Cardiac septum (tissue), 1 donor: ENCODE measurements at regions of chr2 and their contacts with region 1.

Region 1: GRCh38 chr2:210002158-210003157 is at the start of gene RPE:
- DNase-seq: peak; percentile 98
- total RNA-seq, gene RPE: 20.2 TPM

Region 2: GRCh38 chr2:209790066-209790728 is 212.3 kb before region 1 on chr2:
- intact Hi-C with region 1: no loop called
- DNase-seq: no peak

Region 3: GRCh38 chr2:209834767-209835166 is 167.7 kb before region 1 on chr2:
- intact Hi-C with region 1: no loop called
- DNase-seq: no peak

Region 4: DNA sequence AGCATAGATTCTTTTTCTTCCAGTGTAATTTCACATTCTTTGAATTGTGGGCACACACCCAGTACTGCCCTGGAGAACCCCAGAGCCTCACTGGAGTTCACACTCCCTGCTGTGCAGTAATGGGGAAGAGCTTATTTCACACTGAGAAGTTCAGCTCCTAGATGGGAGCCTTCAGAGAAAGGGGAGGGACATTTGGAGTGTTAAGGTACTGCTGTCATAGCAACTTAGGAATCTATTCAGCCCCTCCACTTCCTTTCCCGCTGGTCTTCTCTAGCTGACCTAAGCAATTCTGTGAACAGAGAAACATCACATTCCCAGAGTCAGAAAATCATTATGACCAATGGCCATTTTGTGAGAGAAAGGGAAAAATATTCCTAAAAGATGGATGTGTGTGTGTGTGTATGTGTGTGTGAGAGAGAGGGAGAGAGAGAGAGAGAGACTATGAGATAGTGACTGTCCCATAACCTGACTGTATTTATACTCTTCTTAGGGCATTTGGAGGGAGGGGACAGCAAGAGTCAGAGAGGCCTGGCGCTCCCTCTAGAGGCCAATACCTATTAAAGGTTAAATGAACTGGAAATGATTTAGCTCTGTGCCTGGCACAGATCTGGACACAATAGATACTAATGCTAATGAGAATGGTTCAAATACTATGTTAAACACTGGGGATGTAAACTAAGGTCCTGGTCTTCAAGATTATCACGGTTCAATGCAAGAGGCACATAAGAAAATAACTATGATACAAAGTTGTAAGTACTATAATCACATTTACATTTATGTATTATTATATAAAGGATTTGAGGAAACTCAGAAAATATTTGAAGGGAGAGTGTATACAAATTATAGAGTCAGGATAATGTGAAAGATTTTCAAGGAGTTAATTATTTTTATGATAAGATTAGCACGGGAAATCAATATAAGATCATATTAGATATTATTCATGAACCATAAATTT is 41.5 kb before region 1 on chr2:
- intact Hi-C with region 1: no loop called
- DNase-seq: no peak

Region 5: GRCh38 chr2:210170450-210171303 is 168.2 kb after region 1 on chr2:
- intact Hi-C with region 1: loop called (anchors 1 kb)
- DNase-seq: peak; percentile 99

Region 6: DNA sequence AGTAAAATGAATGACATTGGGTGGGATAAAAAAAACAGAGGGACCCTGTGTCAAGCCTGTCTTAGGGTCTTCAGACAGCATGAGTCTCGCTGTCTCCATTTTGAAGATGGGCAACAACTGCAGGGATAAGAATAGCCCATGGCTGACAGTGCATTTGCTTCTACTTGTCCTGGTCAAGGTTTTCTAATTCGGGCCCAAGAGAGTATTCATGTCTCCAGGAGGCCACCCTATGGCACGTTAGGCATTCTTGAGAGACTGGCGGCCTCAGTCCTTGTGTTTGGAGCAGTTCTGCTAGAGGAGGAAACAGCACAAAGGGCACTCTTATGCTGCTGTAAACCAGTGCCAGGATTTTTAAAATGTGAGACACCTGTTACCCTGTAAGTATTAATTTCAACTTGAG is 322.0 kb after region 1 on chr2:
- intact Hi-C with region 1: no loop called
- DNase-seq: no peak